ENCODE measurements at regions of chr6 and their contacts with region 1.

Region 1: DNA sequence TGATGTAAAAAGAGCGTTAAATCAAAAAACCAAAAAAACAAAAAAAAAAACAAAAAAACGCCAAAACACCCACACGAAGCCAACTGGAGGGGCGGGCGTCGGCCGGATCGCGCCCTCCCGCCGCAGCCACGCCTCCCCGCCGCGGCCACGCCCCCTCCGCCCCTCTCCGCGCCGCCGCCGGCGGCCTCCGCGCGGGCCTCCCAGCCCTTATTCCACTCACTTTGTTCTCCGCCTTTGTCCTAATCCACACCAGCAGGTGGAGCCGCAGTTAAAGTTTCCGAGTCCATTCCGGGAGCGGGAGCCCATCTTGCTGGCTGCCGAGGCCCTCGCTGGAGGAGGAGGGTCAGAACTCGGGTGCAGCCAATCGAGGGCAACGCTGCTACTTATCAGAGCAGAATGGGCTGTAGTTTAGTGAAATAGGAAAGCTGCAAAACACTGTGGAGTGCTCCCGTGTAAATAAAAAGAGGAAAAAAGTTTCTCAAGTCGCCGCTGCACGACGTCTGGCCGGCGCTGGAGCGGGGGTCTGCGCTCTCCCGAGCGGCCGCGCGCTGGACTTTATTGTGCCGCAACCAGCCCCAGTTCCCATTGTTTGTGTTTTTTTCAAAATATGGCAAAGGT is at the start of gene ASF1A:
- DNase-seq: peak; percentile 97 to 98 (median 97)
- H3K4me3 ChIP-seq: peak within 1 kb of the TSS; percentile 63 to 86
- H3K4me3 Mint-ChIP-seq: peak within 1 kb of the TSS; percentile 89 to 100 (median 96)
- H3K27ac ChIP-seq: peak within 1 kb of the TSS; percentile 83
- H3K27ac Mint-ChIP-seq: peak within 1 kb of the TSS; percentile 96 to 99 (median 98)
- H3K4me1 ChIP-seq: peaks cover 72% of the 10 kb centered on the region
- H3K4me1 Mint-ChIP-seq: peaks cover 48 to 78% (median 57%) of the 10 kb centered on the region in 4 donors
- H3K27me3 ChIP-seq: no peaks in the 10 kb centered on the region
- H3K27me3 Mint-ChIP-seq: peaks cover 0 to 1% of the 10 kb centered on the region in 2 donors
- total RNA-seq, gene ASF1A: 64.0 to 66.6 TPM

Region 2: DNA sequence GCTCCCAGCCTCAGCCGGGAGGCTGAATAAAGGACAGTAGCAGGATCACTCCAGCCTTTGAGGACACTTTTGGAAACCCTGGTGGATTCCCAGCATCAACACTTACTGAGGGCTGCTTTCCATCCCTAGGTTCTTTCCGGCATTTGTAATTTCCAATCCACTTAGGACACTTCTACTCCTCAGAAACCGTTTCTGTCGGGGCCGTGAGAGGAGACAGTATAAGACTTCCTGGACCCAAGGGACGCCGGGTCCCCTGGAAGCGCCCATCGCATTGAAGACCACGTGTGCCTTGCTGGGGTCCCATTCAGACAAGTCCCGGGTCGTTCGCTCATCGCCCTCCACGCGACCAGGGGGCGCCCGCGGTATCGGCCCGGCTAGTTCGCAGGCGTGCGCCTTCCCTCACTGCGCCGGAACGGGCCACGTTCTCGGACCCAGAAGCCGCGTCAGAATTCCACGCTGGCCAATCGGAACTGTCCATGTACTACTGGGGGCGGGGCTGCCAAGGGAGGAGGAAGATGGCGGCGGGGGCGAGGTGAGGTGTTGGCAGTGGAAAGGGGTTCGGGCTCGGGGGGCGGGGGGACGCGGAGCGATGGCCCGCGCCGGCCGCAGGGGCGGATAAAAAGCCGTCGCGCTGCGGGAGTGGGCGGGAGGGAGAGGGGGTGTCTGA is 1218.8 kb before region 1 on chr6 and contains the start of gene NUS1:
- CTCF ChIA-PET with region 1: no interaction called
- POLR2A ChIA-PET with region 1: no interaction called
- intact Hi-C with region 1: loop called (anchors 5 kb)
- DNase-seq: peak; percentile 97
- H3K4me3 ChIP-seq: peak within 1 kb of the TSS; percentile 81 to 84
- H3K4me3 Mint-ChIP-seq: peak within 1 kb of the TSS; percentile 89 to 96 (median 93)
- H3K27ac ChIP-seq: peak within 1 kb of the TSS; percentile 67
- H3K27ac Mint-ChIP-seq: peak within 1 kb of the TSS; percentile 85 to 97 (median 95)
- H3K4me1 ChIP-seq: peaks cover 37% of the 10 kb centered on the region
- H3K4me1 Mint-ChIP-seq: peaks cover 38 to 64% (median 52%) of the 10 kb centered on the region in 4 donors
- H3K27me3 ChIP-seq: no peaks in the 10 kb centered on the region
- H3K27me3 Mint-ChIP-seq: no peaks in the 10 kb centered on the region
- total RNA-seq, gene NUS1: 33.0 to 33.2 TPM

Region 3: DNA sequence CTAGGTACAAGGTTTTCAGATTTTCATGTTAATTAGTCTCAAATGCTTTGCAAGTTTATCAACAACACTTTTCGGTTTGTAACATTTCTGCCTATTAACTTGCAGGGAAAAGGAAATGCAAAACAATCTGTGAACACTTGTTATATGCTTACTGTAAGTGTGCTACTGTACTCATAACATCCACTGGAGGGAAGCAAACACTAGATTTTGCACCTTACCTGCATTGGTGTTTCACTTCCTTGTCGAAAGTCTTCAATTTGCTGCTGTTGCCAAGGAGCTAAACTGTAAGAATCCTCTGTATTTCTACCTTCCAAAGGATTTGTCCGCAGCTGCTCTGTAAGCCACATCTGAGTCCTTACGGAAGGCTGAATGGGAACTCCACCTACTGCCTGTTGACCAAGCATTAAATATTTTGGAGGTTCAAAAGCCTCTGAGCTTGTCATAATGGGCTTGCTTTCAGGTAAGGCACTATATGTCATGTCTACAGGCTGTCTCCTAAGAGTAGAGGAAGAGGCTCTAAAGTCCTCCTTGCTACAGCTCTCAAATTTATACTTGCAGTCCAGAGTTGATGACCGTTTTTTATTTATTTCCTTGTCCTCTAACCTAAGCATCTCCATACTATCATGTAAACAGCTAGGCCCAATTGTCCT is 328.5 kb before region 1 on chr6:
- CTCF ChIA-PET with region 1: interaction called, 12 read pairs
- POLR2A ChIA-PET with region 1: interaction called, 4 read pairs
- intact Hi-C with region 1: loop called (anchors 1 kb)
- DNase-seq: peak; percentile 49 to 71 (median 58)
- H3K4me3 ChIP-seq: no peak overlapping the region
- H3K4me3 Mint-ChIP-seq: peak overlapping the region in 1 of 8 donors; percentile 58
- H3K27ac ChIP-seq: no peak overlapping the region
- H3K27ac Mint-ChIP-seq: peak overlapping the region; percentile 7 to 86 (median 64)
- H3K4me1 ChIP-seq: peaks cover 12% of the 10 kb centered on the region
- H3K4me1 Mint-ChIP-seq: peaks cover 20 to 46% (median 27%) of the 10 kb centered on the region in 4 donors
- H3K27me3 ChIP-seq: no peaks in the 10 kb centered on the region
- H3K27me3 Mint-ChIP-seq: no peaks in the 10 kb centered on the region

Region 4: DNA sequence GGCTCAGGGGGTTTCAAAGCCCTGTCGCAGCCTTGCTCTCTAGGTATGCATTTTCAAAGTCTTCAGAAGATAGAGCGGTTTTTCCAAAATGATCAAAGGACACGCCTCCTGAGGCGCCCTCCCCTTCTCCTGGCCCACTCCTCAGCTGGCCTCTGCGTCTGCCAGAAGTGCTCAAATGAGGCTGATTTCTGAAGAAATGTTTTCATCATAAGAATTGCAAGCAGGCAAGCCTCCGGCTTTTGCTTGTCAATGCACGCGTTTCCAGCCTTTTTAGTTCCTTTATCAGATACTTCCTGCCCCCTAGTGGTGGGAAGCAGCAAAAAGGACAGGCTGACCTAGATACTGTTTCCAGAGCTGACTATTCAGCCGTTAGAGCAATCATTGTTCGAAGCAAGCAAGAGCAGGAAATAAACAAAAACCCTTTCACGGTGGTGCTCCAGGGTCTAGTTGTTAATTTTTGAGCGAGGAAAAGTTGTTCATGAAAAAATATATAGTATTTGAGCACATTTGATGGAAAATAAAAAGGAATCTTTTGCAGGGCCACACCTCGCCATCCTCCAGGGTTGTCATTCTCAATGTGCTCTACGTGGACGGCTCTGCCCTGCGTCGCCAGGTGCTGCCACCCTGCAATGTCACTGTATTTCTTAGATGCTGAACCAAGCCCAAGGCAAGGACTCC is 93.4 kb before region 1 on chr6:
- CTCF ChIA-PET with region 1: interaction called, 53 read pairs
- POLR2A ChIA-PET with region 1: interaction called, 47 read pairs
- intact Hi-C with region 1: no loop called
- DNase-seq: peak; percentile 87 to 90 (median 87)
- H3K4me3 ChIP-seq: no peak overlapping the region
- H3K4me3 Mint-ChIP-seq: peak overlapping the region; percentile 52 to 86 (median 65)
- H3K27ac ChIP-seq: peak overlapping the region; percentile 11
- H3K27ac Mint-ChIP-seq: peak overlapping the region; percentile 71 to 96 (median 93)
- H3K4me1 ChIP-seq: peaks cover 30% of the 10 kb centered on the region
- H3K4me1 Mint-ChIP-seq: peaks cover 29 to 53% (median 39%) of the 10 kb centered on the region in 4 donors
- H3K27me3 ChIP-seq: no peaks in the 10 kb centered on the region
- H3K27me3 Mint-ChIP-seq: no peaks in the 10 kb centered on the region

Region 5: DNA sequence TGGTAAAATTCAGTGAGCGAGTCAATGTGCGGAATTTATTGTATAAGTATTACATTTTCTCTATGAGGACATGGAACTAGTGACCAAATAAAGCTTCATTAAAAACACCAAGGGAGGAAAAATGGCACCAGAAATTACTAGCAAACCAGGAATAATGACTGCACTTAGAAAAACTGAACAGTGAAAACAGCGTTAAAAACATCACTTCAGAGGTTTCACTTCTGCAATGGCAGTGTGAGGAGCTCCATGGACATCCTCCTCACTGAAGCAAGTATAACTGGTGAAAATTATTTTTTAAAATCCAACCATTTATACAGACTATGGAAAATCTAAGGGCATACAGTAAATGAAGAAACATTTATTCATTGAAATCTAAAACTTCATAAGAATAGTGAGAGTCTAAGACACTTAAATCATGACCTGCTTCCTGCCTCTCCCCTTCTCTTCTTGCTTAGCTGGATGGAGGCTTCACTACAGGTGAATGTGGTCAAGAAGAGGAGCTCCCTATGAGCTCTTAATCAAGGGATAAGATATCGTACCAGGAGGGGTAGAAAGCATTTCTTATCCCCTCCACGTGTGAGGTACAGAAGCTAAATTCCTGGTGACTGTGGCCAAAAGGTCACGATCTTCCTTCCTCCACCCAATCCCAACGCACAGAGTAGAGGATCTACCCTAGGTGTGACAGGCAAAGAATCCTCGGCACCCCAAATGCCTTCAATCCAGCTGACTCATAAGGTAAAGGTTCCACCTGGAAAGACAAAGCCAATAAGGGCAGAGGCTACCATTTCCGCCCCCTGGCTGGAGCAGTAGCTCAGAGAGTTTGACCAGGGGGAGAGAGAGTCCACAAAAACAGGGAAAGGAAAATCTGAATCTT is 12.2 kb before region 1 on chr6:
- CTCF ChIA-PET with region 1: interaction called, 35 read pairs
- POLR2A ChIA-PET with region 1: interaction called, 100 read pairs
- intact Hi-C with region 1: loop called (anchors 1 kb)
- DNase-seq: no peak
- H3K4me3 ChIP-seq: no peak overlapping the region
- H3K4me3 Mint-ChIP-seq: peak overlapping the region; percentile 13 to 77 (median 67)
- H3K27ac ChIP-seq: no peak overlapping the region
- H3K27ac Mint-ChIP-seq: peak overlapping the region in 4 of 7 donors; percentile 28 to 80 (median 56)
- H3K4me1 ChIP-seq: peaks cover 67% of the 10 kb centered on the region
- H3K4me1 Mint-ChIP-seq: peaks cover 54 to 87% (median 70%) of the 10 kb centered on the region in 4 donors
- H3K27me3 ChIP-seq: no peaks in the 10 kb centered on the region
- H3K27me3 Mint-ChIP-seq: no peaks in the 10 kb centered on the region

Region 6: GRCh38 chr6:119066517-119066916 is 172.6 kb after region 1 on chr6:
- CTCF ChIA-PET with region 1: no interaction called
- POLR2A ChIA-PET with region 1: no interaction called
- intact Hi-C with region 1: no loop called
- DNase-seq: no peak
- H3K4me3 ChIP-seq: no peak overlapping the region
- H3K4me3 Mint-ChIP-seq: no peak overlapping the region
- H3K27ac ChIP-seq: no peak overlapping the region
- H3K27ac Mint-ChIP-seq: no peak overlapping the region
- H3K4me1 ChIP-seq: no peaks in the 10 kb centered on the region
- H3K4me1 Mint-ChIP-seq: peaks cover 0 to 5% (median 0%) of the 10 kb centered on the region in 4 donors
- H3K27me3 ChIP-seq: no peaks in the 10 kb centered on the region
- H3K27me3 Mint-ChIP-seq: no peaks in the 10 kb centered on the region

Region 7: DNA sequence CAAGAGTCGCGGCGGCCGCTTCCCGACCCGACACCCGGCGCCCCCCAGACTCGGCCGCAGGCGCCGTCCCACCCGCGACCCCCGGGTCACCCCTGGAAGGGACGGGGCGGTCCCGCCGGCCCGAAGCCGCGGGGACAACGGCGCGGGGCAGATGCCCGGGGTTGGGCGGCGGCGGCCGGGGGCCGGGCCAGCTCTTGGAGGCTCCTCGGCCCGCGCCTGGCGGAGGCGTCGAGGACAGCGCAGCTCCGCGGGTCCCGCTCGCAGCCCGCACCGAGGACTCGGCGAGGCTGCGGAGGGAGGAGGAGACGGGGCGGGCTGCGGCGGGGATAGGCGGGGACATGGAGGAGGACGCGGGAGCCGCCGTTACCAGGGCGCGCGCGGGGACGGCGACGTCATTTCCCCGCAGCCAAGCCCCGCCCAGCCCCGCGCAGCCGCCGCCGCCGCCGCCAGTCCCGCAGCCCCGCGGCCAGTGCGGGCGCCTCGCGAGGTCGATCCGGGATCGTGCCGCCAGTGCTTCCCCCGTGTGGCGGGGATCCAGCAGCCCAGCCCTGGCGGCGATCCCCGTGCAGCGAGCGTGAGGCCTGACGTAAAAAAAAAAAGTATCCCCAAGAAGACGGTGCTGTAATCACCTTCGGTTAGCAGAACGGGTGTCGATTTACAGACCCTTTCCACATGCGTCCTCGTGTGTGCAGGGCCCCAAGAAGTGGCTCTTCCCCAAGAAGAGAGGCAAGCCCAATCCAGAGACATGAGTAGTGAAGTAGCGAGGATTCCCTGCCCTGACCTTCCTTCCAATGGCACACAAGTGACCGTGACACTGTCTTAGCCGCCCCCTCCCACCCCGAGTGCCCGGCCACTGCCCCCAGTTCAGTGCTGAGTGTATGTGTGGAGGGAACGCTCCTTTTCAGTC is 184.7 kb after region 1 on chr6 and contains the start of gene FAM184A:
- CTCF ChIA-PET with region 1: interaction called, 8 read pairs
- POLR2A ChIA-PET with region 1: interaction called, 18 read pairs
- intact Hi-C with region 1: loop called (anchors 1 kb)
- DNase-seq: peak; percentile 81 to 84 (median 82)
- H3K4me3 ChIP-seq: peak within 1 kb of the TSS; percentile 68 to 80
- H3K4me3 Mint-ChIP-seq: peak within 1 kb of the TSS; percentile 90 to 98 (median 96)
- H3K27ac ChIP-seq: peak within 1 kb of the TSS; percentile 38
- H3K27ac Mint-ChIP-seq: peak within 1 kb of the TSS; percentile 90 to 98 (median 95)
- H3K4me1 ChIP-seq: peaks cover 35% of the 10 kb centered on the region
- H3K4me1 Mint-ChIP-seq: peaks cover 30 to 39% (median 33%) of the 10 kb centered on the region in 4 donors
- H3K27me3 ChIP-seq: no peaks in the 10 kb centered on the region
- H3K27me3 Mint-ChIP-seq: no peaks in the 10 kb centered on the region
- total RNA-seq, gene FAM184A: 5.6 to 6.1 TPM